Cardiac septum (tissue), 1 donor: ENCODE measurements at regions of chr7 and their contacts with region 1.

Region 1: DNA sequence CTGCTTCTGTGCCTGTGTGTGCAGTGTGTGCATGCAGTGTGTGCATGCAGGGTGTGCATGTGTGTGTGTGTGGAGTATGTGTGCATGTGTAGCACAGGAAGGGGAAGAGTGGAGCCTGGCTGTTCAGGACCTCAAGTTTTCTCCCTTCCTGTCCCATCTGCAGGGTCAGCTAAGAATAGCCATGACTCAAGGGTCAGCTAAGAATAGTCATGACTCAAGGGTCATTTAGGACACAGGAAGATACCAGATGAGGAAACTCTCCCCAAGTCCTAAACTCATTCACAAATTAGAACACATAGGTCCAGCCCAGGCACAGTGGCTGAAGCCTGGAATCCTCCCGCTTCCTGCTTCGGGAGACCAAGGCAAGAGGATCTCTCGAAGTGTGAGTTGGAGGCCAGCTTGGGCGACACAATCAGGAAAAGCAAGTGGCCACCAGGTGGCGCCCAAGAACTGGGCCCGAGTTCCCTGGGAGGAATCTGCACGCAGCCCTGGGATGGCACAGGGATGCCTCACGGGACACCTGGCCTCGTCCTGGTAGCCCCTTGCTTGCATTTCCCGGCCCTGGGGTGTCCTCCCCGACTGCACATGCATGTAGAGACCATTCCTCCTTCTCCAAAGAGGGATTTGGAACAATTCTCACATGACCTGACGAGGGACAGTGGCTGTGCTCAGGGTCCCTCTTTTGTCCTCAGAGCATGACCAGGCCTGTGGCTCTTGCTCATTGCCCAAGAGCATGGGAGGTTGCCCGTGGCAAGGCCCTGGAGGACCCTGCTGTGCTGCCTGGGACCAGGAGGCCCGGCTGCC is 21.4 kb upstream of the VOPP1 start:
- DNase-seq: no peak

Region 2: DNA sequence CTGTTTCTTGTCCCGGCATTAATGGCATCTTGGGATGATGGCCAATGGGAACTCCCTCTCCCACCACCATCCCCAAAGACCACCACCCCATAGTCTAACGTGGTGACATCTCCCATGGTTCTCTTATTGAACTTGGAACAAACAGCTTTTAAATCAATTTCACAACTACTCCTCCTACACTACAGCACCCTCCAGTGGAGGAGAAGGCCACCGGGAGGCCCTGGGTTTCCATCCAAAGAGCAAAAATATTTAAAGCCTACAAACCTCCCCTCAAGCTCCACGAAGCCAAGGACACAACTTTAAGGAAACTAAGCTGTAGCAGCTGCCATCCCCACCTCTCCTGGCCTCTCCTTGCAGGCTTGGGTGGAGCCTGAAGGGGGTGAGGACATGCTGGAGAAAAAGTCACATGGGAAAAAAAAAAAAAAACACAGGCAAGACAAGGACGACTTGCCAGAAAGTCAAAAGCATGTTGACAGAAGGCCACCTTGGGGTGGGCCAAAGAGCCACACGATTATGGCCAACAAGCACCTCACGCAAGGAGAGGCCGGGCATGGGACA is 322.6 kb before region 1 on chr7:
- intact Hi-C with region 1: loop called (anchors 10 kb)
- DNase-seq: no peak

Region 3: DNA sequence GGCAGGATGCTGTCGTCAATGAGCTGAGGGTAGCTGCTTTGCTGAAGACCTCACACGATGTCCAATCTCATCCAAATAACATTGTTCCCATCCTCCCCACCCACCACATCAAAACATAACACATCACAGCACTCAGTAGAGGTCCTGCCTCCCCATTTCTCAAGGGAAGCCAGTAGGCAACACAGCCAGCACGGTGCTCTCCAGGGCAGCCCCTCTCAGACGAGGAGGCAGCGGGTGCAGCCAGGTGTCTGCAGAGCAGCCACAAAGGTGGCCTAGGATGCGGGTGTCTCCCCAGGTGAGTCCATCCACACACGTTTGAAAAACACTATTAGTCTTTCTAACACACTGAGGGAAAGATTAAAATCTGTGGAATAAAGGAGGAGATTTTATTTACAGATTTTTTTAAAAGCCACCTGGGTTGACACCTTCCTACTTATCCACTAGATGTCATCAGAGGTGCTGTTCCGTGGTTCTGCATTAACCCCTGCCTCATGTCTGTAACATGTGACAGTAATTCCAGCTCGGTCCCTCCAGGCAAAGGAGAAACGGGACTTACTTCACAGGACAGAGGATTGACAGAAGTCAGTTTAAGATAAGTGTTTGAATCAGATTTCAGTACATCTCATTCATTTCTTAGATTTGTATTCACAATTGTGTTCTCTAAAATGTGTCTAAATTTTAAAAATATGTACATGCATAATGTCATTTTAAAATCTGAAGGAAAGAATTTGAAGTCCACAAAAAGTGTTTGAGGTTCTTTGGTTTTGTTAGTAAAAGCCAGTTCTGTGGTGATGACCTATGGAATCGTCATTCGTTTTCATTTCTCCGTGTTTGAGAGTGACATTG is 160.6 kb before region 1 on chr7:
- intact Hi-C with region 1: loop called (anchors 5 kb)
- DNase-seq: no peak

Region 4: GRCh38 chr7:55526770-55527169 is 66.9 kb before region 1 on chr7:
- intact Hi-C with region 1: no loop called
- DNase-seq: no peak

Region 5: DNA sequence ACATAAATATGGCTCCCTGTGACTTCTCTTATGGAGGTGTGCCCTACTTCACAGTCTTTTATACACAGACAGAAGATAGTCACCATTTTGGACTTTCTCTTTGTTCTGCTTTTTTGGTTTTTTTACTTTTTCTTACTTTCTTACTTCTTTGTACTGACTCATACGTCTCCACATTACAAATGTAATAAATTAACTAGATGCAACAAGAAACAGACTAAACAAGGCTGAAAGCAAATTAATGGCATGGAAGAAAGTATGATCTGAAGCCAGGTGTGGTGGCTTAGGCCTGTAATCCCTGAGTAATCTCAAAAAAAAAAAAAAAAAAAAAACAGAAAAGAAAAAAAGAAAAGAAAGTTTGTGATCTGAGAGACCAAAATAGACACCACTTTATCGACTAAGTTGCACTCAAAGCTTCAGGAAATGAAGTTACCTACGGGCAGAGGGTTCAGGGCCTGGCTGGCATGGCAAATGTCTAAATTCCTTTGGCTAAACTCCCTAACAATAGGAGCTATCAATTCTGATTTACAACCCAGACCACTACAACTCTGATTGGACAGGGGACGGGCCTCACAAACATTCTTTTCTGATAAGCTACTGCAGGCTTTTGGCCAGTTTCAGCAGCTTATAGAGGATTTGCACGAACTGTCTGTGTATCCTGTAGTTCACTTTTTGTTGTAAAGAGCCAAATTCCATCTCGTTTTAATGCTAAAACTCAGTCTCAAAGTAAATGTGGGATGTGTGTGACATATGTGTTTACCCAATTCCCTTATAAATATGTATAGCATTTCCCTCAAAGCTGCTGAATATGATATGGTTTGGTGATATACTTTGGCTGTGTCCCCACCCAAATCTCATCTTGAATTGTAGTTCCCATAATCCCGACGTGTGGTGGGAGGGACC is 139.8 kb after region 1 on chr7:
- intact Hi-C with region 1: no loop called
- DNase-seq: no peak